HepG2 (cell line): ENCODE measurements at regions of chr3 and their contacts with region 1.

Region 1: DNA sequence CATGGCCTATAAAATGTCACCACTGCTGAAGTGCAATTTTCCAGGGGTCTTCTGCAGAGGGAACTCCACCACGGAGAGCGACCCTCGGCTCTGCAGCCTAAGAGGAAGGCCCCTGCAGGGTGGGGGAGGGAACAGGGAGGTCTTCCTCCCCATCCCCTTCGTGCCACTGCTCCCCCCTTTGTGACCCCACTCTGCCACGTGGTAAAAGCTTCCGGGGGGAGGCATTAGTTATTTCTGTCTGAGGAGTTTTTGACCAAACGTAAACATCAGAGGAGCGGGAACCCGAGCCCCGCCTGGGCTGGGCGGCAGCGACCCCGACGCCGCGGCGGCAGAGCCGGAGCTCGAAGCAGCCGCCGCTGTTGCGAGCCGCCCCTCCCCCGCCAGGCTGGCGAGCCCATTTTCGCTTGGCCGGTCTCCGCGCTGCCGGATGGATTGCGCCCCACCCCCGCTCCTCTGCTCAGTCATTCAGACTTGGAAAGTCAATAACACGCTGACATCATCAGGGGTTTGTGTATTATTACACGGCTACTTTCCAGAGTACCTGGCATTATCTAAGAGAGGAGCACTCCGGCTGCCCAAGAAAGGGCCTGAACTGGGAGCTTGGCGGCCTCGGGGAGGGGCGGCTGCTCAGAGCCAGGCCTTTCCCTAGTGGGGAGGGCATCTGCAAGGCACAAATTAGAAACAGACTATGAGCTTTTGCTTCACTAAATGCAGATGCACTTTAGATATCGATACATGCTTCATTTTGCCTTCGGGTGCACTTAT is 162.5 kb upstream of the TBL1XR1 start:
- DNase-seq: peak; percentile 98
- ATAC-seq: peak; percentile 76
- H3K4me3 ChIP-seq: peak overlapping the region; percentile 35 to 77 (median 58); a peak in 5 of 6 replicates
- H3K27ac ChIP-seq: peak overlapping the region; percentile 93
- H3K4me1 ChIP-seq: peaks cover 73% of the 10 kb centered on the region
- H3K27me3 ChIP-seq: no peaks in the 10 kb centered on the region
- CTCF ChIP-seq: peak; percentile 49
- EP300 ChIP-seq: peak; percentile 98
- POLR2A ChIP-seq: peak; percentile 14 to 15; a peak in 2 of 4 replicates
- RAD21 ChIP-seq: peak; percentile 93

Region 2: DNA sequence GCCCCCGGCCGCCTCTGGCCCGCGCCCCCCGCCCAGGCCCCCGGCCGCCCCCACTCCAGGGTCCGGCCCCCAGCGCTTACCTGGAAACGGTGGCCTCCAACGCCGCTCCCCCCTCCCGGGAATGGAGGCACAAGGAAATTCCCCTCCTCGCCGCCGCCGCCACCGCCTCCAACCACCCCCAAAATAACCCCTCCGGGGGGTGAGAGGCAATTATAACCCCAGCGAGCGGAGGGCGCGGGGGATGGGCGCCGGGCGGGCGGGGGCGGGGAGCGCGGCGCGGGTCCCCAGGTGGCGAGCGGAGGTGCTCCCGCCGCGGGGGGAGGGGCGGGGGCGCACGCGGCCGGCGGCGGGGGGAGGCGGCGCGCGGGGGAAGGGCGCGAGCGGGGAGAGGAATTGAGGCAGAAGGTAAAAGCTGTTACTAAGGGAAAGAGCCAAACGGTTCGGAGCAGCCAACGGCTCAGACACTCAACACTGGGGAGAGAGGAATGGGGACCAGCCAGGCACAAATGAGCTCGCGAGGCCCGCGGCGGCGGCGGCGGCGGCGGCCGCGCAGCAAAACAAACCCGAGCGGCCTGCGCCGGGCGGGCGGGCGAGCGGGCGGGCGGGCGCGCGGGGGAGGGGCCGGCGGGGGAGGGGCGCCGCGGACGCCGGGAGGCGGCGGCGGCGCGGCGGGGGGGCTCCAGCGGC is 162.6 kb before region 1 on chr3 and contains the start of gene TBL1XR1:
- CTCF ChIA-PET with region 1: no interaction called
- POLR2A ChIA-PET with region 1: interaction called, 125 read pairs
- in situ Hi-C with region 1: loop called (anchors 5 kb)
- intact Hi-C with region 1: loop called (anchors 1 kb)
- DNase-seq: peak; percentile 85
- ATAC-seq: peak; percentile 75
- H3K4me3 ChIP-seq: peak within 1 kb of the TSS; percentile 82 to 98 (median 93)
- H3K27ac ChIP-seq: peak within 1 kb of the TSS; percentile 98
- H3K4me1 ChIP-seq: peaks cover 36% of the 10 kb centered on the region
- H3K27me3 ChIP-seq: no peaks in the 10 kb centered on the region; a peak in 1 of 5 replicates
- CTCF ChIP-seq: no peak
- EP300 ChIP-seq: 0 out of 4 replicates have a peak, but pooled peaks of 1 of the 2 experiments have one; percentile 12
- POLR2A ChIP-seq: peak; percentile 37 to 49; a peak in 2 of 4 replicates
- RAD21 ChIP-seq: no peak
- total RNA-seq, gene TBL1XR1: 62.5 and 108 TPM in 2 replicates

Region 3: GRCh38 chr3:177251755-177252154 is 108.0 kb before region 1 on chr3:
- CTCF ChIA-PET with region 1: no interaction called
- POLR2A ChIA-PET with region 1: no interaction called
- in situ Hi-C with region 1: no loop called
- intact Hi-C with region 1: no loop called
- DNase-seq: no peak
- ATAC-seq: no peak
- H3K4me3 ChIP-seq: no peak overlapping the region
- H3K27ac ChIP-seq: no peak overlapping the region
- H3K4me1 ChIP-seq: peaks cover 20% of the 10 kb centered on the region
- H3K27me3 ChIP-seq: no peaks in the 10 kb centered on the region; a peak in 2 of 5 replicates
- CTCF ChIP-seq: no peak
- EP300 ChIP-seq: no peak
- POLR2A ChIP-seq: no peak
- RAD21 ChIP-seq: no peak

Region 4: GRCh38 chr3:177337541-177338331 is 22.0 kb before region 1 on chr3:
- CTCF ChIA-PET with region 1: no interaction called
- POLR2A ChIA-PET with region 1: interaction called, 28 read pairs
- in situ Hi-C with region 1: no loop called
- intact Hi-C with region 1: loop called (anchors 1 kb)
- DNase-seq: no peak
- ATAC-seq: no peak
- H3K4me3 ChIP-seq: no peak overlapping the region
- H3K27ac ChIP-seq: peak overlapping the region; percentile 77
- H3K4me1 ChIP-seq: peaks cover 70% of the 10 kb centered on the region
- H3K27me3 ChIP-seq: no peaks in the 10 kb centered on the region
- CTCF ChIP-seq: no peak
- EP300 ChIP-seq: no peak
- POLR2A ChIP-seq: no peak
- RAD21 ChIP-seq: no peak

Region 5: DNA sequence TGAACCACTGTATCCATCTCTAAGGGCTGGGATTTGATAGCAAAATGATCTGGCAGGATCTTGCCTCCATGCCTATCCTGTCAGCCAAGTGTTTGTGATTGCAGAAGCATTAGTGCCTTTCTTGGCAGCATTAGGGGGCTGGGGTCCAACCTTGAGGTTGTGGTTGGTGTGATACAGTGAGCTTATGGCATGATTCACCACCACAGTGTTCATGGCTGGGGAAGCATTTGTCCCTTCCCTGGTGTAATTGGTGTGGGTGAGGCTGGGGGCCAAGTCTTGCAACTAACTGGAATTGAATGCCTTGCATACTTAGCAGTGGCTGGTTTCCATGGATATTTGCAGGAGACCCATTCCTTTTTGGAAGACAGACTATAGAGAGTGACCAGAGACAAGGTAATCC is 108.6 kb after region 1 on chr3:
- CTCF ChIA-PET with region 1: no interaction called
- POLR2A ChIA-PET with region 1: no interaction called
- in situ Hi-C with region 1: no loop called
- intact Hi-C with region 1: no loop called
- DNase-seq: no peak
- ATAC-seq: no peak
- H3K4me3 ChIP-seq: no peak overlapping the region
- H3K27ac ChIP-seq: no peak overlapping the region
- H3K4me1 ChIP-seq: no peaks in the 10 kb centered on the region
- H3K27me3 ChIP-seq: no peaks in the 10 kb centered on the region
- CTCF ChIP-seq: no peak
- EP300 ChIP-seq: no peak
- POLR2A ChIP-seq: no peak
- RAD21 ChIP-seq: no peak

Region 6: GRCh38 chr3:177499779-177500423 is 140.1 kb after region 1 on chr3:
- CTCF ChIA-PET with region 1: no interaction called
- POLR2A ChIA-PET with region 1: interaction called, 10 read pairs
- in situ Hi-C with region 1: no loop called
- intact Hi-C with region 1: no loop called
- DNase-seq: peak; percentile 96
- ATAC-seq: peak; percentile 96
- H3K4me3 ChIP-seq: peak overlapping the region; percentile 32 to 54 (median 49); a peak in 5 of 6 replicates
- H3K27ac ChIP-seq: peak overlapping the region; percentile 95
- H3K4me1 ChIP-seq: peaks cover 44% of the 10 kb centered on the region
- H3K27me3 ChIP-seq: no peaks in the 10 kb centered on the region
- CTCF ChIP-seq: peak; percentile 61
- EP300 ChIP-seq: peak in 1 of 2 experiments; percentile 70; a peak in 1 of 4 replicates
- POLR2A ChIP-seq: peak in 1 of 2 experiments; percentile 56; a peak in 2 of 4 replicates
- RAD21 ChIP-seq: 0 out of 2 replicates have a peak, but pooled peaks have one; percentile 19

Region 7: DNA sequence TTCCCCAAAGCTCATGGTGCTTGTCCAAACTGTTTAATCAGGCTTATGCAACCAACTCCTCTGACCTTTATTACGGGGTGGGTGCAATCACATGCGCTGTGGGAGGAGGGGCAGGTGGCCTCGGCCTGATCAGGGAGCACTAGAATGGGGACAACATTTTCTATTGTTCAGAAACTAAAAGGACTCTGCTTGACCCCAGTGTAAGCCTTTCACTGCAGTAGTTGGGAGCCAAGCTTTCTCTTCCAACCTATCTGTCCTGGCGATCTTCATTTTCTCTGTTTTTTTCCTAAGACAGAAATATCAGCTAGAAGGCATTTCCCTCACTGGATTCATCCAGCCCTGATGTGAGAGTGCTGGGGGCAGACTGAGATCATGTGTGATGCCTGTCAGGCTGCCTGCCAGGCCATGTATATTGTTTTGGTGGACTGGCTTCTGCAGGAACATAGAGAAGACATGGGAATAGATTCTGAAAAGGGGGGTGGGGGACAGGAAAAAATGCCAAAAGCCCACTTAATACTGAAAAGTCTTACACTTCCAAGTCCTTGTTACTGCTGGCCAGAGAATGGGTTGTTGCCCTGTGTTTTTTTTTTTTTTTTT is 464.5 kb after region 1 on chr3:
- CTCF ChIA-PET with region 1: no interaction called
- POLR2A ChIA-PET with region 1: interaction called, 6 read pairs
- in situ Hi-C with region 1: no loop called
- intact Hi-C with region 1: loop called (anchors 5 kb)
- DNase-seq: peak; percentile 93
- ATAC-seq: peak; percentile 90
- H3K4me3 ChIP-seq: peak overlapping the region in 2 of 3 experiments; percentile 1 to 8; a peak in 1 of 6 replicates
- H3K27ac ChIP-seq: peak overlapping the region; percentile 85
- H3K4me1 ChIP-seq: peaks cover 67% of the 10 kb centered on the region
- H3K27me3 ChIP-seq: no peaks in the 10 kb centered on the region
- CTCF ChIP-seq: no peak
- EP300 ChIP-seq: peak; percentile 80 to 97; a peak in 3 of 4 replicates
- POLR2A ChIP-seq: peak in 1 of 2 experiments; percentile 42; a peak in 1 of 4 replicates
- RAD21 ChIP-seq: 0 out of 2 replicates have a peak, but pooled peaks have one; percentile 18